ENCODE measurements at regions of chr7 and their contacts with region 1.

Region 1: DNA sequence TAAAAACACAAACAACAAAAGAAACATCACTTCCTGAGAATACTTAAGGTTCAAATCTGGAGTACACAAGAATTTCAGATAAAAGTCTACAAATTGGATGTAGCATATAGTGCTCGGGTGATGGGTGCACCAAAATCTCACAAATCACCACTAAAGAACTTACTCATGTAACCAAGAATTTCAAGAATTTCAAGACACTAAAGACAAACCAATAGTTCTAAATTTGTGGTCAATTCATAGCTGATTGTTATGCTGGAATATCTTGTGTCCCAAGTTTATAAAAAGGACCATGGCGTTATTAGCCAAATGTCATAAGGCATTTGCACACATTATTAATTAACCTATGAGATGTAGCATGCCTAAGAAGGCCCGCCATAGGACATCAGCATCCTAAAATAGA is 1204.1 kb upstream of the AUTS2 start:
- DNase-seq: no peak
- H3K4me3 ChIP-seq: no peak overlapping the region
- H3K27ac ChIP-seq: no peak overlapping the region
- H3K4me1 ChIP-seq: no peaks in the 10 kb centered on the region
- H3K27me3 ChIP-seq: no peaks in the 10 kb centered on the region
- CTCF ChIP-seq: no peak
- POLR2A ChIP-seq: no peak

Region 2: DNA sequence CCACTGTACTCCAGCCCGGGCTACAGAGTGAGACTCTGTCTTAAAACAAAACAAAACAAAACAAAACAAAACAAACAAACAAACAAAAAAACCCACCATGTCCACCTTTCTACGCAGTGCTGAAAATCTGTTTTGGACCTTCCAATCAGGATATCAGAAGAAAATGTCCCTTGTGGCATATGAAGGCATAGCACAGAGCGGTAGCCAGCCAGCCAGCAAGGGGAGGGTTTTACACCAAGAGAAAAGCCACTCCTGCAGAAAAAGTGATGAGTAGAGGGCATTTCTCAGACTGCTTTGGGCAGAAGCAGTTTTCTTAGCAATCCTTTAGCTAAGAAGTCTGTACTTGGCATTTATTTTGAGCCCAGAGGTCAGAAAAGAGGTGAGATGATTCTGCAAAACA is 785.3 kb before region 1 on chr7:
- intact Hi-C with region 1: loop called (anchors 5 kb)
- DNase-seq: no peak
- H3K4me3 ChIP-seq: no peak overlapping the region
- H3K27ac ChIP-seq: no peak overlapping the region
- H3K4me1 ChIP-seq: no peaks in the 10 kb centered on the region
- H3K27me3 ChIP-seq: no peaks in the 10 kb centered on the region
- CTCF ChIP-seq: no peak
- POLR2A ChIP-seq: no peak

Region 3: GRCh38 chr7:67901808-67902480 is 492.2 kb before region 1 on chr7:
- intact Hi-C with region 1: no loop called
- DNase-seq: no peak
- H3K4me3 ChIP-seq: peak overlapping the region in 2 of 3 donors; percentile 19 to 41
- H3K27ac ChIP-seq: no peak overlapping the region
- H3K4me1 ChIP-seq: no peaks in the 10 kb centered on the region
- H3K27me3 ChIP-seq: no peaks in the 10 kb centered on the region
- CTCF ChIP-seq: no peak
- POLR2A ChIP-seq: no peak